GM12878 (cell line): ENCODE measurements at regions of chr5 and their contacts with region 1.

Region 1: GRCh38 chr5:136080483-136081216 is 51.9 kb downstream of the TGFBI start:
- DNase-seq: peak; percentile 82
- ATAC-seq: peak; percentile 89
- H3K4me3 ChIP-seq: peak overlapping the region; percentile 62; the same call in 1 of the 2 replicates
- H3K27ac ChIP-seq: no peak overlapping the region
- H3K4me1 ChIP-seq: no peaks in the 10 kb centered on the region; the same call in 1 of the 2 replicates
- H3K27me3 ChIP-seq: peaks cover 0 to 2% of the 10 kb centered on the region in 2 experiments; a peak in 2 of 4 replicates
- CTCF ChIP-seq: no peak
- EP300 ChIP-seq: peak in 1 of 2 experiments; percentile 70; a peak in 3 of 4 replicates
- POLR2A ChIP-seq: peak; percentile 60; the same call in 1 of the 2 replicates
- RAD21 ChIP-seq: no peak

Region 2: GRCh38 chr5:135569755-135570452 is 510.7 kb before region 1 on chr5:
- CTCF ChIA-PET with region 1: no interaction called
- POLR2A ChIA-PET with region 1: no interaction called
- RAD21 ChIA-PET with region 1: no interaction called
- SMC1A ChIA-PET with region 1: no interaction called
- in situ Hi-C with region 1: no loop called
- intact Hi-C with region 1: no loop called
- DNase-seq: no peak
- ATAC-seq: peak; percentile 68
- H3K4me3 ChIP-seq: no peak overlapping the region
- H3K27ac ChIP-seq: no peak overlapping the region
- H3K4me1 ChIP-seq: no peaks in the 10 kb centered on the region; the same call in 1 of the 2 replicates
- H3K27me3 ChIP-seq: no peaks in the 10 kb centered on the region
- CTCF ChIP-seq: peak; percentile 33 to 56 (median 39); a peak in 5 of 6 replicates
- EP300 ChIP-seq: no peak
- POLR2A ChIP-seq: no peak
- RAD21 ChIP-seq: no peak

Region 3: GRCh38 chr5:135887351-135887864 is 193.2 kb before region 1 on chr5:
- CTCF ChIA-PET with region 1: interaction called, 4 read pairs
- POLR2A ChIA-PET with region 1: no interaction called
- RAD21 ChIA-PET with region 1: interaction called, 3 read pairs
- SMC1A ChIA-PET with region 1: interaction called, 3 read pairs
- in situ Hi-C with region 1: loop called (anchors 5 kb)
- intact Hi-C with region 1: loop called (anchors 1 kb)
- DNase-seq: peak; percentile 25
- ATAC-seq: peak; percentile 98
- H3K4me3 ChIP-seq: no peak overlapping the region
- H3K27ac ChIP-seq: no peak overlapping the region
- H3K4me1 ChIP-seq: no peaks in the 10 kb centered on the region
- H3K27me3 ChIP-seq: no peaks in the 10 kb centered on the region
- CTCF ChIP-seq: peak; percentile 72 to 78 (median 74)
- EP300 ChIP-seq: no peak
- POLR2A ChIP-seq: no peak
- RAD21 ChIP-seq: peak; percentile 85

Region 4: DNA sequence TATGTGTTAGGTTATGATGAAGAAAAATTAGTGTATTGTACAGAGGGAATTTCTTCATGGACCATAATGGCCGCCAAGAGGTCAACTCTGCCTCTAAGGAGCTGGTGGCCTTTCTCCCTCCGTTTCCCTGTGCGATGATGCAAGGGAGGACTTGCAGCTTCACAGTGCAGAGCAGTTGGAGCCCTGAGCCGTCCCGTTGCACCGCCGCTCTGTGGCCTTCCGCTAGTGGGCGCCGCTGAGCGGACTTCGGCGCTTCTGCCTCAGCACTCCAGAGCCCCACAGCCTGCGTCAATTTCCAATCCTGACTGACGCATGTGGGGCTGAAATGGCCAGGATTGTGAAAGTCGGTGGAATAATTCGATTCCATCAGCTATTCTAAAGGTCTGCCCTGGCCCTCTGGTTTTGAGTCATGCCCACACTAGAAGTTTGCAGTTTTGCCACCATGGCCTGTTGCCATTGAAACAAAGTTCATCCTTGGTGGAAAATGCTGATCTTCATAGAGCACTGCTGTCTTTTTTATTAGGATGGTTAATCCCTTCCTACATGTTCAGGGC is 103.2 kb before region 1 on chr5:
- CTCF ChIA-PET with region 1: interaction called, 23 read pairs
- POLR2A ChIA-PET with region 1: no interaction called
- RAD21 ChIA-PET with region 1: interaction called, 5 read pairs
- SMC1A ChIA-PET with region 1: interaction called, 5 read pairs
- in situ Hi-C with region 1: no loop called
- intact Hi-C with region 1: loop called (anchors 2 kb)
- DNase-seq: no peak
- ATAC-seq: peak; percentile 99
- H3K4me3 ChIP-seq: no peak overlapping the region
- H3K27ac ChIP-seq: no peak overlapping the region
- H3K4me1 ChIP-seq: no peaks in the 10 kb centered on the region
- H3K27me3 ChIP-seq: peaks cover 0 to 3% of the 10 kb centered on the region in 2 experiments; a peak in 2 of 4 replicates
- CTCF ChIP-seq: peak; percentile 71 to 94 (median 88)
- EP300 ChIP-seq: no peak
- POLR2A ChIP-seq: no peak
- RAD21 ChIP-seq: peak; percentile 58

Region 5: DNA sequence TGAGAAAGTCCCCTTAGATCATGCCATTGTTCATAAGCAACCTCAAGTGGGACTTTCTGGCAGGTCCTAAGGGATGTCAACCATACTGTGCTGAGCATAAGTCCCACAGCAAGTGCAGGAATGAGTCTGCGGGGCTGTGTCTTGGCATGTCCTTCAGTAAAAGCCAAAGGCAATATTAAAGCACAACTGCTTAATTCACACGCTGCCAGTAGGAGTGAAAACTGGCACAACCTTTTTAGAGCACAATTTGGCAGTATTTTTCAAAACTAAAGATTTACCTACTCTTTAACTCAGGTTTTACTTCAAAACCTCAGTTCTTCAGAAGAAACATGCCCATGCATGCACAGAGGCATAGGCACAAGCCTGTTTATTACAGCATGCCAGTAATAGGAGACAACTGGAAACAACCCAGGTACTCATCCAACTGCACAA is 27.5 kb after region 1 on chr5:
- CTCF ChIA-PET with region 1: interaction called, 4 read pairs
- POLR2A ChIA-PET with region 1: interaction called, 5 read pairs
- RAD21 ChIA-PET with region 1: interaction called, 7 read pairs
- SMC1A ChIA-PET with region 1: interaction called, 17 read pairs
- in situ Hi-C with region 1: no loop called
- intact Hi-C with region 1: no loop called
- DNase-seq: peak; percentile 45
- ATAC-seq: peak; percentile 82
- H3K4me3 ChIP-seq: no peak overlapping the region
- H3K27ac ChIP-seq: no peak overlapping the region
- H3K4me1 ChIP-seq: no peaks in the 10 kb centered on the region
- H3K27me3 ChIP-seq: no peaks in the 10 kb centered on the region
- CTCF ChIP-seq: no peak
- EP300 ChIP-seq: peak in 1 of 2 experiments; percentile 41; a peak in 1 of 4 replicates
- POLR2A ChIP-seq: no peak
- RAD21 ChIP-seq: no peak

Region 6: DNA sequence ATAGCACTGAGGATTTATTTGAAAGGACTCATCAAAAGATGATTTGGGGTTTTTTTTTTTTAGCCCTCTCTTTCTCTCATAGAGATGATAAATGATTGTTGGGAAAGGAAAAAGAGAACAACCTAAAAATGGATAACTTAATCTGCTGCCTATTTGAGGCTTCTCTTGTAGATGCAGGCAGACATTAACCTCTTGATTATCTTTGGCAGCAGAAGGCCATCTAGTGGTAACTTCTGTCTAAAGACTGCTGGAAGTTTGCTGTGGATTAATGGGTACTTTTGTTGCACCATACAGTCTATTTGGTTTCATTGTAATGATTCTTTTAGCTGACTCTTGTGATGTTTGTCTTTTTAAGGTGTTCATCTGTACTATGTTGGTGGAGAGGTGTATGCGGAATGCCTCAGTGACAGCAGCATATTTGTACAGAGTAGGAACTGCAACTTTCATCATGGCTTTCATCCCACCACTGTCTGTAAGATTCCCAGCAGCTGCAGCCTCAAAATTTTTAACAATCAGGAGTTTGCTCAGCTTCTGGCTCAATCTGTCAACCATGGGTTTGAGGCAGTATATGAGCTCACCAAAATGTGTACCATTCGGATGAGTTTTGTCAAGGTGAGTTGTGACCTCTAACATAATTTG is 93.5 kb after region 1 on chr5:
- CTCF ChIA-PET with region 1: interaction called, 64 read pairs
- POLR2A ChIA-PET with region 1: no interaction called
- RAD21 ChIA-PET with region 1: interaction called, 8 read pairs
- SMC1A ChIA-PET with region 1: interaction called, 28 read pairs
- in situ Hi-C with region 1: no loop called
- intact Hi-C with region 1: loop called (anchors 5 kb)
- DNase-seq: peak; percentile 12
- ATAC-seq: peak; percentile 88
- H3K4me3 ChIP-seq: no peak overlapping the region
- H3K27ac ChIP-seq: no peak overlapping the region
- H3K4me1 ChIP-seq: no peaks in the 10 kb centered on the region
- H3K27me3 ChIP-seq: no peaks in the 10 kb centered on the region
- CTCF ChIP-seq: peak; percentile 67 to 74 (median 70)
- EP300 ChIP-seq: no peak
- POLR2A ChIP-seq: no peak
- RAD21 ChIP-seq: peak; percentile 81